Ovary (tissue), 10 donors: ENCODE measurements at regions of chr10 and their contacts with region 1.

Region 1: DNA sequence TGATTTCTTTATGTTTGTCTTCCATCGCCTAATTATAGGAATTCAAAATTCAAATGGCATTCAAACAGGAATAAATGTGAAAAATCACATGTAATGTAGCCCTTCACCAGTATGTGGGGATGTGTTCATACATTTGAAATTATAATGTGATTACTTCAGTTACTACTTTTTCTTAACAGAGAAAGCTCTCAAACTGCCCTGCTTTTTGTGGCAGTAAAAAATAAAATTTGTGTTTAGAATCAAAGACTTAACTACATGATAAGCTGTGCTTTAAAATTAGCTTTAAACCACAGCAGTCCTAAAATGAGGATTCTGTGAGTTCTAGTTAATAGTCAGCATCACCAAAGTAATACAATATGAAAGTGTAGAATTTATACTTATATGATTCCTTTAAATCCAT is 7.8 kb upstream of the HERC4 start:
- DNase-seq: no peak
- H3K4me3 ChIP-seq: no peak overlapping the region
- H3K27ac ChIP-seq: no peak overlapping the region
- H3K4me1 ChIP-seq: no peaks in the 10 kb centered on the region
- H3K27me3 ChIP-seq: no peaks in the 10 kb centered on the region
- CTCF ChIP-seq: no peak
- EP300 ChIP-seq: no peak
- POLR2A ChIP-seq: no peak

Region 2: GRCh38 chr10:68163735-68164134 is 80.9 kb after region 1 on chr10:
- intact Hi-C with region 1: loop called in 2 of 4 experiments (anchors 5 kb)
- DNase-seq: no peak
- H3K4me3 ChIP-seq: no peak overlapping the region
- H3K27ac ChIP-seq: no peak overlapping the region
- H3K4me1 ChIP-seq: no peaks in the 10 kb centered on the region
- H3K27me3 ChIP-seq: no peaks in the 10 kb centered on the region
- CTCF ChIP-seq: no peak
- EP300 ChIP-seq: no peak
- POLR2A ChIP-seq: no peak

Region 3: DNA sequence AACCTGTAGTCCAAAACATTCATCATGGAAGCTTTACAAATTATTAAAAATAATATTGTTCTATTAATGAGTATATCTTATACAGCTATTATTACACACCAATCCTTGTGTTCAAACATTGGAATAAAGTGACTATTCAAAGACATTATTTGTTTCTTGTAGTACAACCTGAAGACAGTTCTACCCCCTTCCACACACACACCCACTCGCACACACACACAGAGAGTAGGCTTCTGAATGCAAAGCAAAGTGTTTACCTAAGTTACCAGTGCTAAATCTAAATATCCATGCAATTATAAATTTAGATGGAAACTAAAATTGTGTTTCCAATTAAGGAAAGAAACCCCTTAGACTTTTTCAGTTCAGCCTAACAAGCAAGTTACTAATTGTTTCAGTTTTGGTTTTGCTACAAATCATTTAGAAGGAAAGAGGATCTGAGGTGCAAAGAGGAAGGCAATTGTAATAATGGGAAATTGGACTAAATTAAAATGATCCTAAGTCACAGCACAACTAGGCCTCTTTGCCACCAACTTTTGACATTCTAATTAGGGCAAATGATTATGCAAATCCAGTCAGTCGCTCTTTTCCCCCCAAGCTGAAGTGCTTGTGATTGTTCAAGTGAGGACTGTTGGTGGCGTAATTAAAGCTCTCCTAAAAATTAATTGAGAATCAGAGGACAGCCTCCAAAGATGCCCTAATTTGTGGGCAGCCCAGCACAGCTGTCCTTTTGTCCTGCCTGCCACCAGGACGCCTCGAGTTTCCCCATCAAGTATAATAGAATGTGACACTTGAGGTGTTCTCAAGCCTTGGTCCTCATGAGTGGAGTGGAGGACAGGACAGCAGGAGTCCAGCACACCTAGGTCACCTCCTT is 169.0 kb after region 1 on chr10:
- intact Hi-C with region 1: no loop called
- DNase-seq: no peak
- H3K4me3 ChIP-seq: no peak overlapping the region
- H3K27ac ChIP-seq: no peak overlapping the region
- H3K4me1 ChIP-seq: no peaks in the 10 kb centered on the region
- H3K27me3 ChIP-seq: no peaks in the 10 kb centered on the region
- CTCF ChIP-seq: no peak
- EP300 ChIP-seq: no peak
- POLR2A ChIP-seq: no peak